ENCODE measurements at regions of chr22 and their contacts with region 1.

Region 1: DNA sequence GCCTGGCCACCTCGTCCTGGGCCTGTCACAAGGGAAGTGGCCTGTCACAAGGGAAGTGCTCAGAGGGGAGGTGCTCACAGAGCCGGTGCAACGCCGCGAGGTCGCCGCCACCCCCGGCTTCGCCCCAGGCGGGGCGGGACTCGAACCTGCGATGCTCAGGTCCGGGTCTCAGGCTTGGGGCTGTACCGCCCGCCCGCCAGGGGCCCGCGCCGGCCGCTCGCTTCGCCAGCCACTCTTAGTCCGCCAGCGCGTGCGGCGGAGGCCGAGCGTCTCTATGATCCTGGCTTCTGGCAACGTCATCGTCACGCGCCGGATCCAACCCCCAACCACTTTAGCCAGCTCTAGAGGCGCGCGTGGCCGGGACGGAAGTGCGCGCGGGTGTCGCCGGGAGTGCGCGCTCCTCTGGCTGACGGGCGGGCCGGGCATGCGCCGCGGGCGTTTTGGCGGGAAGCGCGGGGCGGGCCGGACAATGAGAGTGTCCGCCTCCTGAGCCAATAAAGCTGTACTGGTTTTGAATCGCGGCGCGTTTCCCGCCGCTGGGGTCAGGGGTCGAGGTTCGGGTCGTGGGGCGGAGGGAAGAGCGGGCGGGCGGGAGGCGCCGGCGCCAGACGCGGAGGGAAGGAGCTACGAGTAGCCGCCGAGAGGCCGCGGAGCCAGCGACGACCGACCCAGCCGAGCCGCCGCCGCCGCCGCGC is at the start of gene TRMT2A:
- DNase-seq: peak; percentile 91 to 99 (median 96)
- ATAC-seq: peak; percentile 80
- H3K4me3 ChIP-seq: peak within 1 kb of the TSS; percentile 85
- H3K4me3 Mint-ChIP-seq: peak within 1 kb of the TSS; percentile 97
- H3K27ac ChIP-seq: peak within 1 kb of the TSS; percentile 76 to 84
- H3K27ac Mint-ChIP-seq: peak within 1 kb of the TSS; percentile 82
- H3K4me1 ChIP-seq: peaks cover 75% of the 10 kb centered on the region
- H3K4me1 Mint-ChIP-seq: peaks cover 30% of the 10 kb centered on the region
- H3K27me3 ChIP-seq: peaks cover 0 to 5% of the 10 kb centered on the region in 2 experiments
- H3K27me3 Mint-ChIP-seq: no peaks in the 10 kb centered on the region
- CTCF ChIP-seq: no peak
- total RNA-seq, gene TRMT2A: 79.3 to 84.2 TPM

Region 2: GRCh38 chr22:19178656-19179496 is 938.2 kb before region 1 on chr22 and contains the start of gene SLC25A1:
- CTCF ChIA-PET with region 1: no interaction called
- POLR2A ChIA-PET with region 1: no interaction called
- intact Hi-C with region 1: loop called in 1 of 2 experiments (anchors 5 kb)
- DNase-seq: peak; percentile 26 to 94 (median 74)
- ATAC-seq: peak; percentile 57
- H3K4me3 ChIP-seq: peak within 1 kb of the TSS; percentile 78
- H3K4me3 Mint-ChIP-seq: peak within 1 kb of the TSS; percentile 93
- H3K27ac ChIP-seq: peak within 1 kb of the TSS; percentile 14 to 59
- H3K27ac Mint-ChIP-seq: peak within 1 kb of the TSS; percentile 77
- H3K4me1 ChIP-seq: peaks cover 40% of the 10 kb centered on the region
- H3K4me1 Mint-ChIP-seq: peaks cover 18% of the 10 kb centered on the region
- H3K27me3 ChIP-seq: no peaks in the 10 kb centered on the region
- H3K27me3 Mint-ChIP-seq: no peaks in the 10 kb centered on the region
- CTCF ChIP-seq: no peak
- total RNA-seq, gene SLC25A1: 17.6 to 18.0 TPM

Region 3: DNA sequence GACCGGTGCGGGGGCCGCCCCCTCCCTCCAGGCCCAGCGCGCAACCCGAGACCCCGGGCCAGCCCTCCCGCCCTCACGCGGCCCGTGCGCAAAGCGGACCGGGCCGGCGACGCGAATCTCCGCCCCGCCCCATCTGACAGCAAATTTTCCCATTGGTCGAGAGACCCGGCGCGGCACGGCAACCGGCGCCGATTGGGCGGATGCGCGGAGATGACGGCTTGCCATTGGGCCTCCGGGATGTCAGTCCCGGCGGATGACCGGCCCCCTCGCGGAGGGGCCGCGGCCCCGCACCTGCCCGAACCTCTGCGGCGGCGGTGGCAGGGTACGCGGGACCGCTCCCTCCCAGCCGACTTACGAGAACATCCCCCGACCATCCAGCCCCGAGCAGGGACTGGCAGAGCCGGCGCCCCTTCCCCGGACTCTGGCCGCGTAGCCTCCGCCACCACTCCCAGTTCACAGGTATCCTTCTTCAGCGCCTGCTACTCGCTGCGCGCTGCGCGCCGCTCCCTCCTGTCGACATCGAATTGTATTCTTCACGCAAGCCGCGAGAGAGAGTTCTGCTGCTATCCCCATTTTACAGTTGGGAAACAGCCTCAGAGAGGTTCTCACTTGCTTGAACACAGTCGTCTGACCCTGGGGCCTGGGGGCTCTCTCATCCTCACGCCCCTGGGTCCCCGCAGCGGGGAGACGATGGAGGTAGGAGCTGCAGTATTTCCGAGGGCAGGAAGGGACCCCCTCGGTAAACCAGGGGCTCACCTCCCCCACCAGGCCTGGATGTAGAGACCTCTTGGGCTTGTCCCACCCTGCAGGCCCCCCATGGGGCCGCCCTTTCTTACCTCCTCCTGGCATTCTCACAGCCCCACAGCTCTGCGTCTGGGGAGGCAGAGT is 100.1 kb before region 1 on chr22 and contains the start of gene ARVCF:
- CTCF ChIA-PET with region 1: no interaction called
- POLR2A ChIA-PET with region 1: interaction called, 20 read pairs
- intact Hi-C with region 1: loop called in 1 of 2 experiments (anchors 1 kb)
- DNase-seq: peak; percentile 86 to 96 (median 90)
- ATAC-seq: peak; percentile 68
- H3K4me3 ChIP-seq: peak within 1 kb of the TSS; percentile 88
- H3K4me3 Mint-ChIP-seq: peak within 1 kb of the TSS; percentile 92
- H3K27ac ChIP-seq: no peak within 1 kb of the TSS
- H3K27ac Mint-ChIP-seq: peak within 1 kb of the TSS; percentile 73
- H3K4me1 ChIP-seq: peaks cover 35% of the 10 kb centered on the region
- H3K4me1 Mint-ChIP-seq: peaks cover 26% of the 10 kb centered on the region
- H3K27me3 ChIP-seq: peaks cover 0 to 3% of the 10 kb centered on the region in 2 experiments
- H3K27me3 Mint-ChIP-seq: peaks cover 4% of the 10 kb centered on the region
- CTCF ChIP-seq: peak; percentile 6
- total RNA-seq, gene ARVCF: 2.2 to 2.5 TPM

Region 4: GRCh38 chr22:20102203-20102780 is 14.8 kb before region 1 on chr22:
- CTCF ChIA-PET with region 1: interaction called, 4 read pairs
- POLR2A ChIA-PET with region 1: interaction called, 17 read pairs
- intact Hi-C with region 1: loop called in 1 of 2 experiments (anchors 2 kb)
- DNase-seq: no peak
- ATAC-seq: no peak
- H3K4me3 ChIP-seq: no peak overlapping the region
- H3K4me3 Mint-ChIP-seq: no peak overlapping the region
- H3K27ac ChIP-seq: peak overlapping the region in 1 of 2 donors; percentile 51
- H3K27ac Mint-ChIP-seq: peak overlapping the region; percentile 96
- H3K4me1 ChIP-seq: peaks cover 32% of the 10 kb centered on the region
- H3K4me1 Mint-ChIP-seq: peaks cover 60% of the 10 kb centered on the region
- H3K27me3 ChIP-seq: no peaks in the 10 kb centered on the region
- H3K27me3 Mint-ChIP-seq: no peaks in the 10 kb centered on the region
- CTCF ChIP-seq: no peak

Region 5: DNA sequence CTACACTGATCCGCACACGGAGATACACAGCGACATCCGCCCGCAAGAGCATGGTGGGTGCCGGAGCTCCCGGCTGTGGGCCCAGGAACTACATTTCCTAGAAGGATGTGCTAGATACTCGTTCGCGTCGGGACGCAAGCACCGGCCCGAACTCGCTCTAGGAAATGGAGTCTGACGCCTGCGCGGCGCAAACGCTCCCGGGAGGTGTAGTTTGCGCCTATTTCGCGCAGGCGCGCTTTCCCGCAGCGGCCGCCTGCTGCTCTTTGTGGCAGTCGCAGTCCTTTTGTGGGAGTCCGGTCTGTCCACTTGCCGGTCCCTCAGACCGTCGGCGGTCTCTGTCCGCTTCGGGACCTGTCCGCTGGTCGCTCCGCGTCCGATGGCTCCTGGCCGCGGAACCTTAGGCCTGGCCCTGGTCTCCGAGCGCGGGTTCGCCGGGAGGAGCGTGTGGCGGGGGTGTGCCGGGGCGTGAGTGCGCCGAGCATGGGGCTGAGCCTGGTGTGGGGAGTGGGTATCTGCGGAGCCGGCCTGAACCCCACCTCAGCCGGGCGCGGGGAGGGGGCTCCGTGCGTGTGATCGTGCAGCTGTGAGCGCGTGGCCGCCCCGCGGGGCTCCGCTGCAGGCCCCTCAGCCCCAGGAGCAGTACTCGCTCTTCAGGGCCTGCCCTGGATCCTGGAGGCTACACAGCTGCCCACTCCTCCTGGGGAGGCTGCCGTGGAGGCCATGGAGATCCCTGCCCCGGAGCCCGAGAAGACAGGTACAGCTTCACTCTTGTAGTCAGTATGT is 277.0 kb after region 1 on chr22 and contains the start of gene ZNF74:
- CTCF ChIA-PET with region 1: no interaction called
- POLR2A ChIA-PET with region 1: interaction called, 8 read pairs
- intact Hi-C with region 1: loop called in 1 of 2 experiments (anchors 10 kb)
- DNase-seq: peak; percentile 70 to 96 (median 83)
- ATAC-seq: peak; percentile 97
- H3K4me3 ChIP-seq: peak within 1 kb of the TSS; percentile 75
- H3K4me3 Mint-ChIP-seq: peak within 1 kb of the TSS; percentile 86
- H3K27ac ChIP-seq: peak within 1 kb of the TSS; percentile 26 to 64
- H3K27ac Mint-ChIP-seq: peak within 1 kb of the TSS; percentile 86
- H3K4me1 ChIP-seq: peaks cover 28% of the 10 kb centered on the region
- H3K4me1 Mint-ChIP-seq: peaks cover 30% of the 10 kb centered on the region
- H3K27me3 ChIP-seq: no peaks in the 10 kb centered on the region
- H3K27me3 Mint-ChIP-seq: no peaks in the 10 kb centered on the region
- CTCF ChIP-seq: no peak
- total RNA-seq, gene ZNF74: 1.7 to 2.3 TPM

Region 6: GRCh38 chr22:21001560-21002325 is 884.6 kb after region 1 on chr22 and contains the start of gene THAP7:
- CTCF ChIA-PET with region 1: no interaction called
- POLR2A ChIA-PET with region 1: no interaction called
- intact Hi-C with region 1: loop called in 1 of 2 experiments (anchors 5 kb)
- DNase-seq: peak; percentile 94 to 99 (median 96)
- ATAC-seq: peak; percentile 87
- H3K4me3 ChIP-seq: peak within 1 kb of the TSS; percentile 82
- H3K4me3 Mint-ChIP-seq: peak within 1 kb of the TSS; percentile 93
- H3K27ac ChIP-seq: peak within 1 kb of the TSS; percentile 96 to 100
- H3K27ac Mint-ChIP-seq: peak within 1 kb of the TSS; percentile 97
- H3K4me1 ChIP-seq: peaks cover 54% of the 10 kb centered on the region
- H3K4me1 Mint-ChIP-seq: peaks cover 46% of the 10 kb centered on the region
- H3K27me3 ChIP-seq: no peaks in the 10 kb centered on the region
- H3K27me3 Mint-ChIP-seq: no peaks in the 10 kb centered on the region
- CTCF ChIP-seq: no peak
- total RNA-seq, gene THAP7: 82.7 to 84.0 TPM